Mammary epithelial cell (primary cell): ENCODE measurements at regions of chr7 and their contacts with region 1.

Region 1: GRCh38 chr7:118449797-118450582 is 225.5 kb downstream of the ANKRD7 start:
- DNase-seq: no peak
- H3K4me3 ChIP-seq: no peak overlapping the region
- H3K27ac ChIP-seq: no peak overlapping the region
- H3K4me1 ChIP-seq: no peaks in the 10 kb centered on the region
- H3K27me3 ChIP-seq: no peaks in the 10 kb centered on the region
- CTCF ChIP-seq: no peak

Region 2: GRCh38 chr7:118013252-118014010 is 436.6 kb before region 1 on chr7:
- CTCF ChIA-PET with region 1: no interaction called
- dilution Hi-C with region 1: no loop called
- in situ Hi-C with region 1: no loop called
- intact Hi-C with region 1: no loop called
- DNase-seq: no peak
- H3K4me3 ChIP-seq: no peak overlapping the region
- H3K27ac ChIP-seq: no peak overlapping the region
- H3K4me1 ChIP-seq: no peaks in the 10 kb centered on the region
- H3K27me3 ChIP-seq: no peaks in the 10 kb centered on the region
- CTCF ChIP-seq: no peak

Region 3: DNA sequence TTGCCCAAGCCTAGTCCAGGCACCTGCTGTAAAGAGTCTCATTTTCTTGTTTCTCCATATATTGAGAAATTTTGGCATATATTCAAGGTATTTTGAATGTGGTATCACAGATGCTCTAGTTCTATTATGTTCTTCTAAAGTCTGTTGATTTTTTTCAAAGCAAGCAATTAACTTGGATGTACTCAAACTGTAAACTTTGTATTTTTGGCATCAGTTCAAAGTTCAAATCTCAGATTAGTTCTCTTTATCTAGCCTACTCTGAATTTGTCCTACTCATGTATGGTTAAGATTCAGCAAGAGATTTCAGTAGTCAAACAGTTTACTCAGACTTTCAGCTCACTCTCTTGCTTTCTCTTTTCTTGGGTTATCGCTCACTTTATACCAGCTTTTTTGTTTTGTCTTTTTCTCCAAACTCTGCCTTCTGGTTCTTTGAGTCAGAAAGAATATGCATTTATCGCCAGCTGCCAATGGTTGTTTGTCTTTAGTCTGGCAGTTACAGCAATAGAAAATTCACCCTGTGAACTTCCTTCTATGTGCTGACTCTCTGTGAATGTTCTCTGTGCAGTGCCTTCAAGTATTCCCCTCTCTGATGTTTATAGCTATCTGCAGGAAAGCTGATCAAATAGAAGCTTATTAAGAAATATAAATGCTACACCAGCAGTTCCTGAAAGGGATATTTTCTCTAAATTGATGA is 169.5 kb before region 1 on chr7:
- CTCF ChIA-PET with region 1: no interaction called
- dilution Hi-C with region 1: no loop called
- in situ Hi-C with region 1: no loop called
- intact Hi-C with region 1: no loop called
- DNase-seq: no peak
- H3K4me3 ChIP-seq: no peak overlapping the region
- H3K27ac ChIP-seq: no peak overlapping the region
- H3K4me1 ChIP-seq: no peaks in the 10 kb centered on the region
- H3K27me3 ChIP-seq: peaks cover 1% of the 10 kb centered on the region
- CTCF ChIP-seq: no peak

Region 4: GRCh38 chr7:118369987-118370386 is 80.0 kb before region 1 on chr7:
- CTCF ChIA-PET with region 1: no interaction called
- dilution Hi-C with region 1: loop called (anchors 5 kb)
- in situ Hi-C with region 1: no loop called
- intact Hi-C with region 1: no loop called
- DNase-seq: no peak
- H3K4me3 ChIP-seq: no peak overlapping the region
- H3K27ac ChIP-seq: no peak overlapping the region
- H3K4me1 ChIP-seq: no peaks in the 10 kb centered on the region
- H3K27me3 ChIP-seq: no peaks in the 10 kb centered on the region
- CTCF ChIP-seq: no peak